B cell (primary cell): ENCODE measurements at regions of chr3 and their contacts with region 1.

Region 1: DNA sequence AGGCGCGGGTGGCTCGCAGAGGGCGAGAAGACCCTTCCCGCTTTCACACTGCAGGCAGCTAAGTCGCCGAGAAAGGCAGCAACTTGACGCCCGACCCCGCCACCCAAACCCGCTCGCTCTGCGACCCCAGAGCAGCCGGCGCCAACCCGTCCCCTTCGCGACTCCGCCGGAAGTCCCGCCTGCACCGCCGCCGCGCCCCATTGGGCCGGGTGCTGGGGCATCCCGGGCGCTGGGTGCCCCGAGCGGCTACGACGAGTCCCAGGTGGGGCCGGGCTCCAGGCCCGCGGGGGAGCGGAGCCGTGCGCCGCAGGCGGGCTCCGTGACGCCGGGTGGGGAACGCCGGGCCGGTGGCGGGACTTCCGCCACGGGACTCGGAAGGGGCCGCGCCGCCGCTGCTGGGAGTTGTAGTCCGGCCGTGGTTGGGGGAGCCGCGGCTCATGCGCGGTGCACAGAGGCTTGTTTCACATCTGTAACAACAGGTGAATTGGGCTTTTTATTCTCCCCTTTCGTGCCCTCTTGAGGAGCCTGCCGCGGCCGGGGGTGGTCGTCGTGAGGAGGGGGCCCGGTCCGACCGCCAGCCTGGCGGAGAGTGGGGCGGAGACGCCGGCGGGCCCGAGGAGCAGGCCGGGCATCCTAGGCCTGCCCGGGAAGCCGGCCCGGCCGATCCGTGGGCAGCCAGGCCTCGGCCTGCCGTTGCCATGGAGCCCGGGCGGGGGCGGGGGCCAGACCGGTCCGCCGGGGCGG is at the start of gene DHX30:
- DNase-seq: peak; percentile 91
- ATAC-seq: peak; percentile 91
- H3K4me3 ChIP-seq: peak within 1 kb of the TSS; percentile 57 to 84 (median 78)
- H3K4me3 Mint-ChIP-seq: peak within 1 kb of the TSS; percentile 95
- H3K27ac ChIP-seq: peak within 1 kb of the TSS; percentile 66 to 90
- H3K27ac Mint-ChIP-seq: peak within 1 kb of the TSS; percentile 92
- H3K4me1 ChIP-seq: peaks cover 8 to 13% of the 10 kb centered on the region in 2 donors
- H3K4me1 Mint-ChIP-seq: peaks cover 12% of the 10 kb centered on the region
- H3K27me3 ChIP-seq: no peaks in the 10 kb centered on the region
- H3K27me3 Mint-ChIP-seq: no peaks in the 10 kb centered on the region
- CTCF ChIP-seq: no peak
- total RNA-seq, gene DHX30: 81.8 and 88.9 TPM in 2 replicates

Region 2: DNA sequence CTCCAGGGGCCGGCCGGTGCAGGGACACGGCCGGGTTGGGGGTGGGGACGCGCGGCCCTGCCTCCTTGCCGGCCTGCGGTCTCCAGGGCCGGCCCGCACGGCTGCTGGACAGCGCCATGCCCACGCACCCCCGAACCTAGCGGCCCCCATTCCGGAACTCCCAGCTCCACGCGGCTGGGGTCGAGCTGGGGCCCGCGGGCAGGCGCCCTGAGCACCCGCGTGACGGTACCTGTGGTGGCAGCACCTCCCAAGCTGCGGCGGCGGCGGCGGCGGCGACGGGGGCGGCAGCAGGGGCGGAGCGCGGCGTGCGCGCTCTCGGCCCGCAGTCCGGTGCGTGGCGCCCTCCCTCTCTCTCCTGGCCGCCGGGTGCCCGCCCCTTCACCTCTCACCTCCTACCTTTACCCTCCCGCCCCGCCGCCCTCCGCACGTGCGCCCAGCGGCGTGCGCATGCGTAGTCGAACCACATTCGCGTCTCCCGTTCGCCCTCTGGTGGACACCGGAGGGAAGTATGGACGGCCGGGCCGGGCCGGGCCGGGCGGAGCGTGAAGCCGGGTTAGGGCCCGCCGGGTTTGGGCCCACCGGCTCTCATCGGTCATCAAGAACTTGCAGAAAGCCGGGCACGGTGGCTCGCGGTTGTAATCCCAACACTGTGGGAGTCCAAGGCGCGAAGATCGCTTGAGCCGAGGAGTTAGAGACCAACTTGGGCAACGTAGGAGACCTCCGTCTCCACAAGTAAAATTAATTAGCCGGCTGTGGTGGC is 327.2 kb before region 1 on chr3 and contains the start of gene SCAP:
- CTCF ChIA-PET with region 1: no interaction called
- POLR2A ChIA-PET with region 1: no interaction called
- intact Hi-C with region 1: loop called (anchors 1 kb)
- DNase-seq: peak; percentile 97
- ATAC-seq: peak; percentile 94
- H3K4me3 ChIP-seq: peak within 1 kb of the TSS; percentile 68 to 94 (median 81)
- H3K4me3 Mint-ChIP-seq: peak within 1 kb of the TSS; percentile 93
- H3K27ac ChIP-seq: peak within 1 kb of the TSS; percentile 80 to 81
- H3K27ac Mint-ChIP-seq: peak within 1 kb of the TSS; percentile 97
- H3K4me1 ChIP-seq: peaks cover 15 to 24% of the 10 kb centered on the region in 2 donors
- H3K4me1 Mint-ChIP-seq: peaks cover 34% of the 10 kb centered on the region
- H3K27me3 ChIP-seq: no peaks in the 10 kb centered on the region
- H3K27me3 Mint-ChIP-seq: no peaks in the 10 kb centered on the region
- CTCF ChIP-seq: peak; percentile 97
- total RNA-seq, gene SCAP: 100.0 and 113 TPM in 2 replicates

Region 3: DNA sequence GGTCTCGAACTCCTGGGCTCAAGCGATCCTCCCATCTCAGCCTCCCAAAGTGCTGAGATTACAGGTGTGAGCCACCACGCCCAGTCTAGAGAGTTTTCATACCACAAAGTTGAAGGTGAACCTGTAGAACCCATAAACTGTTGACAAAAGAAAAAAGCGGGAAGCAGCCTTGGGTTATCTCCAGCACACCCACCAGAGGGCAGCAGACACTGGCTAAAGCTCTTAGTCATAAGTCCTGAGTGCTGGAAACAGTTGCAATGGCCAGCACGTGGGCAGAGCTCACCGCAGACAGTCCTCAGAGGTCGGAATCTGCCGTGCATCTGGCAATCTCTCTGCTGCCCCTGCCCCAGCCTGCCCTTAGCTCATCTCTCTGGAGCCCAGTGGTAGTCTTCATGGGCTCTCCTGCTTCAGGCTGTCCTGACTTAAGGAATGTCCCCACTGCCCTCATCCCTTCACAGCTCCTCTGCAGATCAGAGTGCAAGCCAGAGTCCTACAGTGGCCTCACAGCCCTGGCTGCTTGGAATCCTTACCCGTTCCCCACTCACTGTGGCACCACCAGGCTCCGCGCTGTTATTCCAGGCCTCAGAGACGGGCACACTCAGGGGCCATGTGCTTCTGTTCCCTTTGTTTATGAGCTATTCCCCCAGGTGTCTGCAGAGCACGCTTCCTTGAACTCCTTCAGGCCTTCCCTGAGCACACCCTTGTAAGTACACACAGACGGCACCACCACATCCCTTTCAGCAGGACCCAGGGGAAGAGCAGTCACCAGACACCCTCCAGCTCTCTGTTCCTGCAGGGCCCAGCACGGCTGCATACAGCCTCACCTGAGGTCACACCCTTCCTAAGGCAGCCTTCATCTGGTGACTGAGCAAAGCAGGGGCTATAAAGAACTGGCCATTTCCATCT is 280.6 kb before region 1 on chr3:
- CTCF ChIA-PET with region 1: interaction called, 26 read pairs
- POLR2A ChIA-PET with region 1: no interaction called
- intact Hi-C with region 1: no loop called
- DNase-seq: peak; percentile 83
- ATAC-seq: peak; percentile 95
- H3K4me3 ChIP-seq: no peak overlapping the region
- H3K4me3 Mint-ChIP-seq: no peak overlapping the region
- H3K27ac ChIP-seq: no peak overlapping the region
- H3K27ac Mint-ChIP-seq: no peak overlapping the region
- H3K4me1 ChIP-seq: peaks cover 3 to 4% of the 10 kb centered on the region in 2 donors
- H3K4me1 Mint-ChIP-seq: peaks cover 9% of the 10 kb centered on the region
- H3K27me3 ChIP-seq: no peaks in the 10 kb centered on the region
- H3K27me3 Mint-ChIP-seq: no peaks in the 10 kb centered on the region
- CTCF ChIP-seq: peak; percentile 92

Region 4: DNA sequence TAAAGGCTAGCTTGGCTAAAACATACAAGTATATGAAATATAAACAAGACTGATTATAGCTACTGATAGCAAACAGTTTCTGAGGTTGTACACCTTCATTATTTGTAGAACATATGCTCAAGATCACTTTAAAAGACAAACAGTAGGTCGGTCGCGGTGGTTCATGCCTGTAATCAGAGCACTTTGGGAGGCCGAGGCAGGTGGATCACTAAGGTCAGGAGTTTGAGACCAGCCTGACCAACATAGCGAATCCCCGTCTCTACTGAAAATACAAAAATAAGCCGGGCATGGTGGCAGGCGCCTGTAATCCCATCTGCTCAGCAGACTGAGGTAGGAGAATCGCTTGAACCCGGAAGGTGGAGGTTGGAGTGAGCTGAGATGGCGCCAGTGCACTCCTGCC is 101.5 kb before region 1 on chr3:
- CTCF ChIA-PET with region 1: no interaction called
- POLR2A ChIA-PET with region 1: no interaction called
- intact Hi-C with region 1: no loop called
- DNase-seq: no peak
- ATAC-seq: no peak
- H3K4me3 ChIP-seq: no peak overlapping the region
- H3K4me3 Mint-ChIP-seq: no peak overlapping the region
- H3K27ac ChIP-seq: no peak overlapping the region
- H3K27ac Mint-ChIP-seq: no peak overlapping the region
- H3K4me1 ChIP-seq: no peaks in the 10 kb centered on the region
- H3K4me1 Mint-ChIP-seq: no peaks in the 10 kb centered on the region
- H3K27me3 ChIP-seq: no peaks in the 10 kb centered on the region
- H3K27me3 Mint-ChIP-seq: no peaks in the 10 kb centered on the region
- CTCF ChIP-seq: no peak

Region 5: DNA sequence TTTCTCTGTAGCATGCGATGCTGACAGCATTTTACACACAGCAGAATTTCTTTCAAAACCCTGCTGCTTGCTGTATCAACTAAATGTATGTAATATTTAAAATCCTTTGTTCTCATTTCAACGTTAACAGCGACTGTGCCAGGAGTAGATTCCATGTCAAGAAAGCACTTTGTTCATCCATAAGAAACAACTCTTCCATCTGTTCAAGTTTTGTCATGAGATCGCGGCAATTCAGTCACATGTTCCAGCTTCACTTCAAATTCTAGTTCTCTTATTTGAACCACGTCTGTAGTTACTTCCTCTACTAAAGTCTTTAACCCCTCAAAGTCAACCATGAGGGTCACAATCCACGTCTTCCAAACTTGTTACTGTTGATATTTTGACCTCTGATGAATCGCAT is 71.8 kb before region 1 on chr3:
- CTCF ChIA-PET with region 1: no interaction called
- POLR2A ChIA-PET with region 1: no interaction called
- intact Hi-C with region 1: no loop called
- DNase-seq: no peak
- ATAC-seq: no peak
- H3K4me3 ChIP-seq: no peak overlapping the region
- H3K4me3 Mint-ChIP-seq: no peak overlapping the region
- H3K27ac ChIP-seq: no peak overlapping the region
- H3K27ac Mint-ChIP-seq: no peak overlapping the region
- H3K4me1 ChIP-seq: peaks cover 0 to 4% of the 10 kb centered on the region in 2 donors
- H3K4me1 Mint-ChIP-seq: peaks cover 7% of the 10 kb centered on the region
- H3K27me3 ChIP-seq: no peaks in the 10 kb centered on the region
- H3K27me3 Mint-ChIP-seq: no peaks in the 10 kb centered on the region
- CTCF ChIP-seq: no peak

Region 6: GRCh38 chr3:47791193-47791855 is 11.6 kb before region 1 on chr3:
- CTCF ChIA-PET with region 1: interaction called, 3 read pairs
- POLR2A ChIA-PET with region 1: no interaction called
- intact Hi-C with region 1: loop called (anchors 1 kb)
- DNase-seq: no peak
- ATAC-seq: no peak
- H3K4me3 ChIP-seq: no peak overlapping the region
- H3K4me3 Mint-ChIP-seq: no peak overlapping the region
- H3K27ac ChIP-seq: no peak overlapping the region
- H3K27ac Mint-ChIP-seq: peak overlapping the region; percentile 4
- H3K4me1 ChIP-seq: no peaks in the 10 kb centered on the region
- H3K4me1 Mint-ChIP-seq: peaks cover 1% of the 10 kb centered on the region
- H3K27me3 ChIP-seq: no peaks in the 10 kb centered on the region
- H3K27me3 Mint-ChIP-seq: no peaks in the 10 kb centered on the region
- CTCF ChIP-seq: no peak

Region 7: GRCh38 chr3:47865192-47865591 is 62.3 kb after region 1 on chr3:
- CTCF ChIA-PET with region 1: no interaction called
- POLR2A ChIA-PET with region 1: no interaction called
- intact Hi-C with region 1: no loop called
- DNase-seq: no peak
- ATAC-seq: no peak
- H3K4me3 ChIP-seq: no peak overlapping the region
- H3K4me3 Mint-ChIP-seq: no peak overlapping the region
- H3K27ac ChIP-seq: no peak overlapping the region
- H3K27ac Mint-ChIP-seq: no peak overlapping the region
- H3K4me1 ChIP-seq: no peaks in the 10 kb centered on the region
- H3K4me1 Mint-ChIP-seq: no peaks in the 10 kb centered on the region
- H3K27me3 ChIP-seq: no peaks in the 10 kb centered on the region
- H3K27me3 Mint-ChIP-seq: no peaks in the 10 kb centered on the region
- CTCF ChIP-seq: no peak

Region 8: DNA sequence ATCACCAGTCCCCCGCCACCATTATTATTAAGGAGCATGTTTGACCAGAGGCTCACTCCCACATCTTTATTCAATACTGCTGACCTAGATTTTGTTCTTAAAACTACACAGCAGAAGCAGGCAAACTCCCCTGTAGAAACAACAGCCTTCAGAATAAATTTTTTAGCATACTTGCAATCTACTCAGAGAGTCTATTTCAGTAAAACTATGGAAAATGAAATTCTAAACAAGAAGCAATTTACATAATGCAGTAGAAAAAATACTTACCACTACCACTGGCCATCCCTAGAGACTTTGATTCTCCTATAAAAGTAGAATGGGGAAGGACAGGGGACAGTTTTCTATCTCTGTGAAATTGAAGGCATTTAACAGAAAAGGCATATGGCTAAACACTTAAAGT is 137.3 kb after region 1 on chr3:
- CTCF ChIA-PET with region 1: no interaction called
- POLR2A ChIA-PET with region 1: no interaction called
- intact Hi-C with region 1: no loop called
- DNase-seq: no peak
- ATAC-seq: no peak
- H3K4me3 ChIP-seq: no peak overlapping the region
- H3K4me3 Mint-ChIP-seq: no peak overlapping the region
- H3K27ac ChIP-seq: no peak overlapping the region
- H3K27ac Mint-ChIP-seq: no peak overlapping the region
- H3K4me1 ChIP-seq: peaks cover 7 to 8% of the 10 kb centered on the region in 2 donors
- H3K4me1 Mint-ChIP-seq: peaks cover 15% of the 10 kb centered on the region
- H3K27me3 ChIP-seq: no peaks in the 10 kb centered on the region
- H3K27me3 Mint-ChIP-seq: no peaks in the 10 kb centered on the region
- CTCF ChIP-seq: no peak